Activated CD8-positive, alpha-beta T cell treated with anti-CD3 and anti-CD28 coated beads, Interleukin-2, amount 10 ng/mL, durations not matched to agents 7 days and 5 days (primary cell): ENCODE measurements at regions of chr1 and their contacts with region 1.

Region 1: GRCh38 chr1:15741183-15741850 is 982 bp upstream of the TMEM82 start:
- DNase-seq: peak; percentile 81
- ATAC-seq: peak; percentile 85
- H3K4me3 Mint-ChIP-seq: no peak overlapping the region
- H3K27ac Mint-ChIP-seq: no peak overlapping the region
- H3K4me1 Mint-ChIP-seq: peaks cover 7% of the 10 kb centered on the region
- H3K27me3 Mint-ChIP-seq: no peaks in the 10 kb centered on the region

Region 2: GRCh38 chr1:15595809-15596617 is 145.3 kb before region 1 on chr1:
- CTCF ChIA-PET with region 1: interaction called, 10 read pairs
- POLR2A ChIA-PET with region 1: no interaction called
- DNase-seq: no peak
- ATAC-seq: no peak
- H3K4me3 Mint-ChIP-seq: no peak overlapping the region
- H3K27ac Mint-ChIP-seq: no peak overlapping the region
- H3K4me1 Mint-ChIP-seq: no peaks in the 10 kb centered on the region
- H3K27me3 Mint-ChIP-seq: peaks cover 2% of the 10 kb centered on the region